ENCODE measurements at regions of chr1 and their contacts with region 1.

Region 1: GRCh38 chr1:53959664-53960250 is 13.6 kb downstream of the LRRC42 start:
- DNase-seq: peak; percentile 41 to 61 (median 55)
- H3K4me3 ChIP-seq: no peak overlapping the region
- H3K4me3 Mint-ChIP-seq: no peak overlapping the region
- H3K27ac ChIP-seq: no peak overlapping the region
- H3K27ac Mint-ChIP-seq: no peak overlapping the region
- H3K4me1 ChIP-seq: no peaks in the 10 kb centered on the region
- H3K4me1 Mint-ChIP-seq: peaks cover 0 to 6% (median 2%) of the 10 kb centered on the region in 4 donors
- H3K27me3 ChIP-seq: no peaks in the 10 kb centered on the region
- H3K27me3 Mint-ChIP-seq: no peaks in the 10 kb centered on the region

Region 2: GRCh38 chr1:53869454-53870117 is 90.2 kb before region 1 on chr1:
- CTCF ChIA-PET with region 1: interaction called, 12 read pairs
- POLR2A ChIA-PET with region 1: no interaction called
- intact Hi-C with region 1: no loop called
- DNase-seq: no peak
- H3K4me3 ChIP-seq: no peak overlapping the region
- H3K4me3 Mint-ChIP-seq: no peak overlapping the region
- H3K27ac ChIP-seq: no peak overlapping the region
- H3K27ac Mint-ChIP-seq: peak overlapping the region in 1 of 7 donors; percentile 36
- H3K4me1 ChIP-seq: no peaks in the 10 kb centered on the region
- H3K4me1 Mint-ChIP-seq: peaks cover 0 to 3% (median 1%) of the 10 kb centered on the region in 4 donors
- H3K27me3 ChIP-seq: no peaks in the 10 kb centered on the region
- H3K27me3 Mint-ChIP-seq: no peaks in the 10 kb centered on the region

Region 3: GRCh38 chr1:53878492-53879105 is 81.2 kb before region 1 on chr1:
- CTCF ChIA-PET with region 1: interaction called, 33 read pairs
- POLR2A ChIA-PET with region 1: no interaction called
- intact Hi-C with region 1: loop called (anchors 1 kb)
- DNase-seq: peak in 4 of 5 donors; percentile 14 to 26 (median 23)
- H3K4me3 ChIP-seq: no peak overlapping the region
- H3K4me3 Mint-ChIP-seq: no peak overlapping the region
- H3K27ac ChIP-seq: no peak overlapping the region
- H3K27ac Mint-ChIP-seq: no peak overlapping the region
- H3K4me1 ChIP-seq: no peaks in the 10 kb centered on the region
- H3K4me1 Mint-ChIP-seq: peaks cover 2 to 8% (median 3%) of the 10 kb centered on the region in 4 donors
- H3K27me3 ChIP-seq: no peaks in the 10 kb centered on the region
- H3K27me3 Mint-ChIP-seq: no peaks in the 10 kb centered on the region